ENCODE measurements at regions of chr20 and their contacts with region 1.

Region 1: DNA sequence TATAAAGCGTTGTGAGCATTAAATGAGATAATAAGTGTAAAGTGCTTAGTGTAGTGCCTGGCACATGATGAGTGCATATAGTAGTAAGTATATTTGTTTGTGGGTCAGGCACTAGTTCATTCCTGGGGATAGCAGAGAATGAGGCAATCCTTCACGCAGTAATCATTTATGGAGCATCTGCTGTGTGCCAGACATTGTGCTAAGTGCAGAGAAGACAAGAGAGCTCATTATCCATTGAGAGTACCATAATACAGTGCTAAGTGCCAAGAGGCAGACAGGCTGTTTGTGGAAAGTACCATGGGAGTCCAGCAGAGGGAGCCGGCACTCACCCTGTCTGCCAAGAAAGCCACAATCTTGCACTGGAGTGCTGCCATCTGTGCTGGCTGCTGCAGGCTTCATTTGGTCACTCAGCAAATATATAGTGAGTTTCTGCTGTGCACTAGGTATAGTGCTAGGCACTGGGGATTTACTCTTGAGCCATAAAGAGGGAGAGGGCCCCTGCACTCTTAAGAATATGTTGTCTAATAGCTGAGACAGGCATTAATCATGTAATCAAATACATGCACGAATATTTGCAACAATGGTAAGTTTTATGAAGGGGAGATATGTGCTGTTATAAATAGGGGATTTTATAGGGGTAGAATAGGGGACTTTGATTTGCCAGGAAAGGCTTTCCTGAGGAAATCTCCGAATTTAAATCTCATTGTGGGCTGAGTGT is 12.9 kb upstream of the MROH8 start:
- DNase-seq: peak; percentile 86 to 97 (median 93)
- H3K4me3 ChIP-seq: peak overlapping the region in 13 of 59 donors; percentile 4 to 43 (median 10)
- H3K27ac ChIP-seq: peak overlapping the region in 52 of 59 donors; percentile 8 to 88 (median 62)
- H3K27me3 ChIP-seq: no peaks in the 10 kb centered on the region
- CTCF ChIP-seq: peak; percentile 88 to 99 (median 96)

Region 2: DNA sequence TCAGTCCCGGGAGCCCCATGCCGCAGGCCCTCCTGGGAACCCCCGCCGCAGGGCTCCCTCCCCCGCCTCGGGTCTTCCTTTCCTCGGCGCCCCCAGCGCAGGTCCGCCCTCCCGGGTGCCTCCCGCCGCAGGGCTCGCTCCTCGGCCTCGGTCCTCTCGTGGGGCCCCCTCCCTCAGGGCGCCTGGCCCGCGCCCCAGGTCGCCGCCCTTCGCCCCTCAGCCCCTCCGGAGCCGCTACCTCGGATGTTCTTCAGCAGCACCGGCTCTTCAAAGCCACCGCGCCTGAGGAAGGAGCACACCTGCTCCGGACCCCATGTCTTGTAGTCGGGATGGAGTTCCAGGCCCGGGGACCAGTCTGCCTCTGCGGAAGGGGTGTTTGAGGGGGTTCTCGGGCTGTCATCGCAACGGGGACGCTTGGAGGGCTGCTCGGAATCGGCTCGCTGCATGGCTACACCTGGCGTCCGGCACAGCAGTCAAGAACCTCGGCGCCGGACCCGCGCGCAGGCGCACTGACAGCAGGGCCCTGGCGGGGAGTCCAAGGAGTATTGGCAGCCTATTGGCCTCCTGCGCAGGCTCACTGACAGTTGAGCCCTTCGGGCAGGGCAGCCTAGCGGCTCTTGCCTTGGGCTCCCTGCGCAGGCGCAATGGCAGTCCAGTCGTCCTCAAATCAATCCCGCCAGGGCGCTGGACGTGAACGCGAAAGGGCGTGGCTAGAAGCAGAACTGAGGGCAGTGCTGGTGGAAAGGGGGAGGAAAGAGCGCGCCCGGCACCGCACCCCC is 240.9 kb before region 1 on chr20 and contains the start of gene SAMHD1:
- intact Hi-C with region 1: loop called in 1 of 2 experiments (anchors 5 kb)
- DNase-seq: peak; percentile 95 to 98 (median 96)
- H3K4me3 ChIP-seq: peak within 1 kb of the TSS; percentile 74 to 99 (median 95)
- H3K27ac ChIP-seq: peak within 1 kb of the TSS; percentile 30 to 94 (median 84)
- H3K27me3 ChIP-seq: no peaks in the 10 kb centered on the region
- CTCF ChIP-seq: peak in 42 of 56 donors; percentile 7 to 62 (median 32)
- total RNA-seq, gene SAMHD1: 27.8 to 103 (median 50.8) TPM

Region 3: GRCh38 chr20:37178839-37179670 is 13.2 kb before region 1 on chr20 and contains the starts of genes MROH8 and RPN2:
- intact Hi-C with region 1: loop called (anchors 1 kb)
- DNase-seq: peak; percentile 98 to 99 (median 99)
- H3K4me3 ChIP-seq: peak within 1 kb of the TSS; percentile 67 to 97 (median 87)
- H3K27ac ChIP-seq: peak within 1 kb of the TSS; percentile 40 to 100 (median 98)
- H3K27me3 ChIP-seq: no peaks in the 10 kb centered on the region
- CTCF ChIP-seq: peak in 23 of 56 donors; percentile 9 to 49 (median 25)
- total RNA-seq, gene MROH8: 4.9 to 20.6 (median 11.6) TPM
- total RNA-seq, gene RPN2: 51.0 to 98.1 (median 63.8) TPM

Region 4: GRCh38 chr20:37365760-37366638 is 173.7 kb after region 1 on chr20:
- intact Hi-C with region 1: no loop called
- DNase-seq: no peak
- H3K4me3 ChIP-seq: no peak overlapping the region
- H3K27ac ChIP-seq: peak overlapping the region in 26 of 59 donors; percentile 0 to 73 (median 27)
- H3K27me3 ChIP-seq: no peaks in the 10 kb centered on the region
- CTCF ChIP-seq: no peak

Region 5: DNA sequence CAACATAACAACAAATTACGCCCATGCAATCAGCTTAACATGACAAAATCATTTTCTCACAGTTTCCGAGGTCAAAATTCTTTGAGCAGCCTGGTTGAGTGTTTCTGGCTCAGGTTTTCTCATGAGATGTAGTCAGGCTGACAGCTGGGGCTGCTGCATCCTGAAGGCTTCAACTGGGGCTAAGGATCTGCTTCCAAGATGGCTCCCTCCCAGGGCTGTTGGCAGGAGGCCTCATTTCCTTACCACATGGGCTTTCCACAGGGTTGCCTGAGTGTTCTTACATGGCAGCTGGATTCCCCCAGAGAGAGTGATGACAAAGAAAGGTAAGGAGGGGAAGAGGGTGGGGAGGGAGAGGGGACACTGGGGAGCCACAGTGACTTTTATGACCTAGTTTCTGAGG is 265.6 kb after region 1 on chr20:
- intact Hi-C with region 1: no loop called
- DNase-seq: no peak
- H3K4me3 ChIP-seq: no peak overlapping the region
- H3K27ac ChIP-seq: no peak overlapping the region
- H3K27me3 ChIP-seq: no peaks in the 10 kb centered on the region
- CTCF ChIP-seq: no peak

Region 6: DNA sequence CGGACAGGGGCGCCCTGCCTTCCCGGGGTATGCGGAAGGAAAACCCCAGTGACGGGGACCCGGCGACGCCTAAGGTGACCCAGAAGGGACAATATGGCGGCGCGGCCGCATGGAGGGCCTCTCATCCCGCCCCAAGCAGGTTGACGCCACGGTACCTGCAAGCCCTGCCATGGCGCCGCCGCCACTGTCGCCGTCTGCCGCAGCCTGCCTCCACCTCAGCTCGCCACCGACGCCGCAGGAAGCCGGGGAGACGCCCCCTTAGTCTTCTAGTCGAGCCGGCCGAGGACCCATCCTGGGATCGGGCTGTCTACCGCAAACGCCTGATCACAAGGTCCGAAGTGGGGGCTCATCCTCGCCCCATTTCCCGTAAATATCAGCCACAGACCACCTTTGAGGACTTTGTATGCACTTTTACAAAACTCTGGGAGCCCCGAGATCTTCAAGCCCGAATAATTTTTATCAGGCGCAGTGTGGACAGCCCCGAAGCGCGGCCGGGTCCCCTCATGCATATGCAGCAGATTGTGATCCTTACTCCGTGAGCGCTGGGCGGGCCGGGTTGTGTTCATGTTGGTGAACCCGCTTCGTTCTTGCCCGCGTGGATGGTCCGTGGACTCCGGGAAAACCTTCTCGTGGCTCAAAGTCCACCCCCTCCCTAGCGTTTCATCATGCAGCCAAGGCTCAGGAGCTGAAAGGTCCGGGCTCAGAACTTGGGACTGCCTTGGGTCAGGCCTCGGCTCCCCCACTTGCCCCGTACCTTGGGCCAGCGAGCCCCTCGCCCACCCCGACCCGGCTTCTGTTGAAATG is 335.5 kb after region 1 on chr20 and contains the start of gene BLCAP:
- intact Hi-C with region 1: loop called in 1 of 2 experiments (anchors 2 kb)
- DNase-seq: peak; percentile 79 to 91 (median 88)
- H3K4me3 ChIP-seq: peak within 1 kb of the TSS; percentile 73 to 100 (median 99)
- H3K27ac ChIP-seq: peak within 1 kb of the TSS; percentile 86 to 100 (median 99)
- H3K27me3 ChIP-seq: no peaks in the 10 kb centered on the region
- CTCF ChIP-seq: peak in 18 of 56 donors; percentile 7 to 53 (median 28)
- total RNA-seq, gene BLCAP: 82.4 to 206 (median 151) TPM

Region 7: DNA sequence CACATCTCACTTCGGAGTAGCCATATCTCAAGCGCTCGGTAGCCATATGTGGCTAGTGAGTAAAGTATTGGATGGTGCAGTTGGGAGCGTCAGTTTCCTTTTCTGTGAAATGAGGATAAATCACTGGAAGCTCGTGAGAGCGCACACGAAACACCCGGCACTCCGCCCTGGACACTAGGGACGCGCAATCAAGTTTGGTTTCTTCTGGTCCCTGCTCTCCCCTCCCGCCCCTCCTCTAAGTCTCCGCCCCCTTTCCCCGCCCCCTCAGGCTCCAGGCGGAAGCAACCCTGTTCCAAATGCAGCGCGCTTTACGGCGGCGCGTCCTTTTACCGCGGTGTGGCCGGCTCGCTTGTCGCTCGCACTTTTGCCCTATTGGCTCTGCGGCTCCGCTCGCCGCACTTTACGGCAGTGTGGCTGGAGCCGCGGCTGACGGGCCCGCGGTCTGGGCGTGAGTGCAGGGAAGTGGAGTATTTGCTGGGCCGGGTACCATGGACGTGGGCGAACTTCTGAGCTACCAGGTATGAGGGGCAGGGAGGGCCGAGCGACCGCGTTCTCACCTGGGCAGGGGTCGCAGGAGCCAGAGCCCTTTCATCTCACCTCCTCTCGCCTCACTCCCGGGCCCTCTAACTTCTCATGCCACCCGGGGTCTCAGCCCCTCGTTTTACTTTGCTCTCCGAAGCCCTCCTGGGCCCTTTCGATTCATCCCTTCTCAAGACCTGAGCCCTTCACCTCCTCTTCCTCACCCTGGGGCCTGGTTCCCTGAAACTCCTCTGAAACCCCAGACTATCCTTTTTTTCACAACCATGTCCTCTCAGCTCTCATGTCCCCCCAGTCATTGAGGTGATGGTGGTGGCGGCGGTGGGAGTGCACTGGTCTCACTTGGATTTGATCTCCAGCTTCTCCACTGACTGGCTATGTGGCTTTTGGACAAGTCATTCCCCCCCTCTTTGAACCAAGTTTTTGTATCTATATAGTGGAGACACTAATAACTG is 501.6 kb after region 1 on chr20 and contains the start of gene CTNNBL1:
- intact Hi-C with region 1: loop called in 1 of 2 experiments (anchors 10 kb)
- DNase-seq: peak; percentile 94 to 97 (median 96)
- H3K4me3 ChIP-seq: peak within 1 kb of the TSS; percentile 70 to 99 (median 92)
- H3K27ac ChIP-seq: peak within 1 kb of the TSS in 34 of 59 donors; percentile 4 to 87 (median 52)
- H3K27me3 ChIP-seq: peaks cover 0 to 5% (median 0%) of the 10 kb centered on the region in 45 donors
- CTCF ChIP-seq: peak in 49 of 56 donors; percentile 8 to 63 (median 35)
- total RNA-seq, gene CTNNBL1: 24.9 to 52.4 (median 41.0) TPM

Measured in dorsolateral prefrontal cortex (tissue), 120 donors.